H1 (cell line): ENCODE measurements at regions of chr10 and their contacts with region 1.

Region 1: GRCh38 chr10:3776796-3777571 is 8.0 kb downstream of the KLF6 start:
- DNase-seq: no peak
- H3K4me3 ChIP-seq: no peak overlapping the region
- H3K27ac ChIP-seq: no peak overlapping the region
- H3K4me1 ChIP-seq: peaks cover 0 to 10% (median 6%) of the 10 kb centered on the region in 4 experiments; a peak in 6 of 7 replicates
- H3K27me3 ChIP-seq: no peaks in the 10 kb centered on the region
- CTCF ChIP-seq: no peak
- EP300 ChIP-seq: no peak
- POLR2A ChIP-seq: peak in 1 of 2 experiments; percentile 33; a peak in 1 of 3 replicates
- RAD21 ChIP-seq: no peak

Region 2: DNA sequence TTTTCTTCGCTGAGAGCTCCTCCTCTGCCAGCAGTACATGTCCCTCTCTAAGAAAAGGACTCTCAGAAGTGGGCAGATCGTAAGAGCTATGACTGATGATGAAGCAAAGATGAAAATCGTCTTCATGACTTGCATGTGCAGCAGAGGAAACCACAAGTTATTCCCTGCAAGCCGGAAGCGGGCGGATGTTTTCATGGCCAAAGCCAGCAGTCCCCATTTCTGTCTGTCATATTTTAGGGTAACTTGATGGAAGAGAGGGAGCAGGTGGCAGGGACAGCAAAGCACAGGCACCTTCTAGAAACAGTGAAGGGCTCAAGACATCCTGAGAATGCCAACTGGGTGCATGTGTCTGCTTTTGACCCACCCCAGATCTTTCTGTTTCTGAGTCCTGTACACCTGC is 11.8 kb before region 1 on chr10:
- CTCF ChIA-PET with region 1: interaction called, 3 read pairs
- POLR2A ChIA-PET with region 1: interaction called, 12 read pairs
- DNase-seq: no peak
- H3K4me3 ChIP-seq: no peak overlapping the region
- H3K27ac ChIP-seq: no peak overlapping the region
- H3K4me1 ChIP-seq: peaks cover 0 to 10% (median 6%) of the 10 kb centered on the region in 4 experiments; a peak in 5 of 7 replicates
- H3K27me3 ChIP-seq: no peaks in the 10 kb centered on the region
- CTCF ChIP-seq: no peak
- EP300 ChIP-seq: no peak
- POLR2A ChIP-seq: no peak
- RAD21 ChIP-seq: no peak